Activated CD4-positive, alpha-beta memory T cell treated with anti-CD3 and anti-CD28 coated beads, Interleukin-2, amount 10 ng/mL, durations not matched to agents 7 days and 5 days (primary cell): ENCODE measurements at regions of chr15 and their contacts with region 1.

Region 1: GRCh38 chr15:66720206-66721006 is 18.4 kb downstream of the SMAD6 start:
- DNase-seq: peak; percentile 78
- H3K4me3 Mint-ChIP-seq: no peak overlapping the region
- H3K27ac Mint-ChIP-seq: peak overlapping the region; percentile 85
- H3K4me1 Mint-ChIP-seq: peaks cover 43% of the 10 kb centered on the region
- H3K27me3 Mint-ChIP-seq: peaks cover 9% of the 10 kb centered on the region

Region 2: GRCh38 chr15:66700802-66701421 is 19.5 kb before region 1 on chr15:
- CTCF ChIA-PET with region 1: interaction called, 22 read pairs
- POLR2A ChIA-PET with region 1: interaction called, 37 read pairs
- DNase-seq: peak; percentile 90
- H3K4me3 Mint-ChIP-seq: peak overlapping the region; percentile 73
- H3K27ac Mint-ChIP-seq: peak overlapping the region; percentile 9
- H3K4me1 Mint-ChIP-seq: peaks cover 21% of the 10 kb centered on the region
- H3K27me3 Mint-ChIP-seq: peaks cover 28% of the 10 kb centered on the region

Region 3: DNA sequence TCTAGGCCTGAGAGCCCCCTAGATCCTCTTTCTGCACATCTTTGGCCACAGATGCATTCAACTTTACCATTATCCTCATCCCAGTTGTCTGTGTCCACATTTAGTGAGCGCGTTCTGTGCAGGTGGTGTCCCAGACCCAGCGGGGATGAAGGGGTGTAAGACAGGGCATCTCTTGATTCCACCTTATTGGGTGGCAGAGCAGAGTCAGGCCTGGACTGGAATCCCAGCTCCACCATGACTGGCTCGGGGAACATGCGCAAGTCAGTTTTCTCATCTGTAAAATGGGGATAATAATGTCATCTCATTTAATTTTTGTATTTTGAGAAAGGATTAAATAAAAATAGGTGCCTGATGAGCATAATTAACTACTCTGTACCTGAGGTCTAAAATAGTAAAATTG is 10.5 kb before region 1 on chr15:
- CTCF ChIA-PET with region 1: interaction called, 22 read pairs
- POLR2A ChIA-PET with region 1: interaction called, 37 read pairs
- DNase-seq: no peak
- H3K4me3 Mint-ChIP-seq: no peak overlapping the region
- H3K27ac Mint-ChIP-seq: no peak overlapping the region
- H3K4me1 Mint-ChIP-seq: no peaks in the 10 kb centered on the region
- H3K27me3 Mint-ChIP-seq: peaks cover 12% of the 10 kb centered on the region